OCI-LY7 (cell line): ENCODE measurements at regions of chr2 and their contacts with region 1.

Region 1: GRCh38 chr2:111037128-111037527 is 83.6 kb upstream of the BCL2L11 start:
- DNase-seq: peak; percentile 61
- H3K4me3 ChIP-seq: peak overlapping the region; percentile 30
- H3K27ac ChIP-seq: peak overlapping the region; percentile 66
- H3K4me1 ChIP-seq: peaks cover 80% of the 10 kb centered on the region
- CTCF ChIP-seq: no peak

Region 2: DNA sequence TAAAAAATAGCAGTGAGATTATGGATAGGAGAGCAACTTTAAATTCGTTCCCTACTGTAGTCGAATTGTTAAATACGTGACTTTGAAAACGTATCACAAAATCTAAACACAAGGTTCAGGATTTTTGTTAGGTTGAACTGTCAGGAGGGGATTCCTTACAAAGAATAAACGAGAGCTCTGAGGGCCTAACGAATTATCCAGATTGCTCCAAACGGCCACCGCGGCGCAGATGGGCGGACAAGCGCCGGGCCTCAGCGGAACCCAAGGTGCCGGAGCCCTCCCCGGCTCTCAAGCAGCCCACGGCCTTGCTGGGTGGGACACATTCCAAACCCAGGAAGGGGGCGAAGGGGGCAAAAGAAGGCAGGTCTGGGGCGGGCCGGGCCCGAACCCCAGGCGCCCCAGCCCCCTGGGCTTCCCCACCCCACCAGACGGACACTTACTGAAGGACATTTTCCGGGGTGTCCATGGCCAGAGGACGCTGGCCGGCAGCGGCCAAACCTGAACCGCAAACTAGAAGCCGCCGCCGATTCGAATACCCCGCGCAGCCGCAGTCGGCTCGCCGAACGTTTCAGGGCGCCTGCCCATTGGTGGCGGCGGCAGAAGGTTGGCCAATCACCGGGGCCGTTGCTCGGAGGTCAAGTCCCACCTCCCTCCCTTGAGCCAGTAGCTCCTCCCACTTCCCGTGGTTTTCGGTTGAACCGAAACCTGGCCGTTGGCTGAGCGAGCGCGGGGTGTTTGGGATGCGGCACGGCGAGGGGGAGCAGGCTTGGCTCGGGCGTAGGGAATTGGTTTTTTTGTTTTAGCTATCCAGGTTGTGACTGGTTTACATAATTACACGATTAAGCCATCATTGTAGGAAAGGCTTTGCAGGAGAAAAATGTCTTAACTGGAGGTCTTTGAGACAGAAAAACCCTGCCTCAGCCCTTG is 359.3 kb before region 1 on chr2 and contains the start of gene BUB1:
- CTCF ChIA-PET with region 1: no interaction called
- POLR2A ChIA-PET with region 1: interaction called, 3 read pairs
- intact Hi-C with region 1: loop called (anchors 2 kb)
- DNase-seq: peak; percentile 96
- H3K4me3 ChIP-seq: peak within 1 kb of the TSS; percentile 92
- H3K27ac ChIP-seq: peak within 1 kb of the TSS; percentile 91
- H3K4me1 ChIP-seq: peaks cover 34% of the 10 kb centered on the region
- CTCF ChIP-seq: no peak
- total RNA-seq, gene BUB1: 107 and 125 TPM in 2 replicates

Region 3: DNA sequence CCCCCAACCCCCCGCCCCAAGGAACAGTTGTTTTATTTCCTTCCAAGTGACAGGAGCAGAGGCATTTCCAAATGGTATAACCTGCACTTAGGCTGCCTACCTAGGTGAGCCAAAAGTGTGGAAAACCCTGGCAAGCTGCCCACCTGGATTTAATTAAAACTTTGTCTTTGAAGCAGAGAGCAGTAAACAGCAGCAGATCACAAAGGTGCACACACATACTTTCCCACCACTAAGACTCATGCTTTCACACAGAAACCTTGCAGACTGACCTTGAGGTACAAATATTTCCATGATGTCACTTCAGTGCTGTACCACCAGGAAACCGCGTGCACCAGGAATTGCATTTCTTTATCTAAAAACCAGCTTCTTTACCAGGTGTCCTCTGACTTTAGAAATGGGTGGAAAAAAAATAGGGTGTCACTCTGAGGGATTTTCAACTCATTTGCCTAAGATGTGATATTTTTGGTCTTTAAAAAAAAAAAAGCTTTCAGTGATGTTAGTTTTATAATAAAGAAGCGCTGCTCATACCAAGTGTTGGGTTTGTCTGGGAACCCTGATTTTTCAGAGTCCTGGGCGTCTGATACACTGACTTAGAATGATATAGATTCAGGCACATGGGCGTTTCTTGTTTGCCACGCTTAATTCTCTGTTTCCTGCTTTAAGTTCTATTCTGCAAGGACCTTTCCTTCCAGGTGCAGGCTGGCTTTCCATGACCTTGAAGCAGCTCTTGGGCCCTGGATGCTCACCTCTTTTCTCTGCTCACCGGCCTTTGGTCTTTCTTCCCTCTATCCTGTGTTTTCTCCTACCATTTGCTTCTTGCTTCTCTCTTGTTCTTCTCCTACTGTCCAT is 12.9 kb after region 1 on chr2:
- CTCF ChIA-PET with region 1: interaction called, 4 read pairs
- POLR2A ChIA-PET with region 1: interaction called, 13 read pairs
- intact Hi-C with region 1: loop called (anchors 2 kb)
- DNase-seq: peak; percentile 84
- H3K4me3 ChIP-seq: peak overlapping the region; percentile 60
- H3K27ac ChIP-seq: peak overlapping the region; percentile 89
- H3K4me1 ChIP-seq: peaks cover 77% of the 10 kb centered on the region
- CTCF ChIP-seq: no peak